Right ventricle myocardium inferior (tissue), 1 donor: ENCODE measurements at regions of chr6 and their contacts with region 1.

Region 1: DNA sequence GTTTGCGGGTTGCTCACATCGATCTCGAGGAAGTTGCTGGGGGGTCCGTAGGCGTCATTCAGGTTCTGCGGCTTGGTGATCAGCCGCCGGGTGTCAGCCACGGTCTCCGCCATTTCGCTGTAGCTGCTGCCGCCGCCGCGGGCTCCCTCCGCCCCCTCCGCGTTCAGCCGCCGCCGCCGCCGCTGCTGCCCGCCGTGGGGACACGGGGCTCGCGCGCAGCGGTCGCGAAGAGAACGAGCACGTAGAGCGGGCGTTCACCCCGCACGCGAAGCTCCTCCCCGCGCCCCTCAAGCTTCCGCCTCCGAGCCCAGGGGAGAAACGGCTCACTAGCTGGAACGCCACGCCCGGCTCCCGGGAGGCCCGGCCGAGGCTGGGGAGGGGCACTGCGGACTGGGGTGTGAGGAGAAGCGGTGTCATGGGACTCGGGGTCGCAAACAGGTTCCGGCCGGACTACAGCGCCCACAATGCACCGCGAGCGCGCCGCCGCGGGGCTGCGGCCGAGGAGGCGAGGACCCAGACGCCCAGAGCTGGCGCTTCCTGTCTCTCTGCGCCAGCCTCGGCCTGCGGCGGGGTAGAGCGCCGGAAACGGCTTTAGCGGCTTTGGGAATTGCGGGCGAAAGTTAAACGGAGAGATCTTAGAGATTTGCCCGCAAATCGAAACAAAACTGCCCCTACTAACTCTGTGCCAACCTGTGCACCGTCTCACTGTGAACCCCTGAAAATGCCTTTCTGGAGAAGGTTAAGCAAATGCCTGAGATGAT is at the start of gene SNX3:
- DNase-seq: peak; percentile 96
- ATAC-seq: peak; percentile 98
- total RNA-seq, gene SNX3: 274 TPM

Region 2: GRCh38 chr6:108294727-108295625 is 34.0 kb after region 1 on chr6 and contains the start of gene AFG1L:
- intact Hi-C with region 1: loop called (anchors 1 kb)
- DNase-seq: peak; percentile 97
- ATAC-seq: peak; percentile 100
- total RNA-seq, gene AFG1L: 15.7 TPM

Region 3: DNA sequence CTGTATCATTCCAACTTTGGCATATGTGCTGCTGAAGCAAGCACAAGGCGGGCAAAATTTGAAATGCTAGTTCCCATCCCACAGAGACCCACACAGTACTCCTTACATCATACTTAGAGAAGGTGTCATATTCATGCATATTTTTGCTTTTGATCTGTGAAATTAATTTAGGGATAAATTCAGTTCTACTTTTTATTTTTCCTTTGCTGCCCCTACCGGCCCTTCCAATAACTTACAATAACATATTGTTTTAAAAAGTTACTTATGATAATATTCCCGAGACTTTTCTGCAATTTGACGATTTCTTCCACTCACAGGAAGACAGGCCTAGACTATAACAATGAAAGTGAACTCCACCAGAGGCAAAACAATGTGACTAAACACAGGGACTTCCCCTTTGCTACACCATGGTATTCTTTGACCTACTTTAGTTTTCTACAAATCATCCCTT is 798.6 kb after region 1 on chr6:
- intact Hi-C with region 1: no loop called
- DNase-seq: no peak
- ATAC-seq: no peak